Naive thymus-derived CD8-positive, alpha-beta T cell (primary cell): ENCODE measurements at regions of chr13 and their contacts with region 1.

Region 1: GRCh38 chr13:73625562-73626339 is 508.5 kb downstream of the KLF12 start:
- DNase-seq: peak in 7 of 10 donors; percentile 12 to 73 (median 51)
- ATAC-seq: peak; percentile 98 to 99
- H3K4me3 Mint-ChIP-seq: peak overlapping the region; percentile 25 to 71 (median 62)
- H3K27ac Mint-ChIP-seq: peak overlapping the region; percentile 22 to 92 (median 84)
- H3K4me1 Mint-ChIP-seq: peaks cover 3 to 51% (median 36%) of the 10 kb centered on the region in 4 donors
- H3K27me3 Mint-ChIP-seq: no peaks in the 10 kb centered on the region

Region 2: DNA sequence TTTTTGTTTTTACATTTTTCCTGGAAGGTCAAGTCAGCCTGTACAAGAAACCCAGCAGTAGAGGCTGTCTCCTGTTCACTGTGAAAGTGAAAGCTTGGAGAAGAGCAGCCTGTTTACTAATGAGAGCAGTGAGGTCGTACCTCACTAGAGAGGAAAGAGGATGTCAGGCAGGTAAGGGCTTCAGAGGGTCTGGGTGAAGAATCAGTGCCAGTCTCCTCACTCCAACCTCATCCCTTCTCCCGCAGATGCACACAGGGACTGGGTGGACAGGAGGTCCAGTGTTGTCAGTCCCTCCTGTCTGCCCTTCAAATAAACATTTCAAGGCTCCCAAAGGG is 104.5 kb before region 1 on chr13:
- POLR2A ChIA-PET with region 1: interaction called, 10 read pairs
- DNase-seq: peak in 6 of 10 donors; percentile 8 to 57 (median 40)
- ATAC-seq: peak; percentile 91
- H3K4me3 Mint-ChIP-seq: peak overlapping the region; percentile 75 to 92 (median 86)
- H3K27ac Mint-ChIP-seq: peak overlapping the region; percentile 89 to 97 (median 96)
- H3K4me1 Mint-ChIP-seq: peaks cover 10 to 22% (median 19%) of the 10 kb centered on the region in 4 donors
- H3K27me3 Mint-ChIP-seq: no peaks in the 10 kb centered on the region

Region 3: GRCh38 chr13:73608711-73609485 is 16.9 kb before region 1 on chr13:
- POLR2A ChIA-PET with region 1: no interaction called
- DNase-seq: no peak
- ATAC-seq: no peak
- H3K4me3 Mint-ChIP-seq: no peak overlapping the region
- H3K27ac Mint-ChIP-seq: no peak overlapping the region
- H3K4me1 Mint-ChIP-seq: peaks cover 0 to 5% (median 0%) of the 10 kb centered on the region in 4 donors
- H3K27me3 Mint-ChIP-seq: no peaks in the 10 kb centered on the region

Region 4: GRCh38 chr13:73661687-73662425 is 36.1 kb after region 1 on chr13:
- POLR2A ChIA-PET with region 1: interaction called, 11 read pairs
- DNase-seq: no peak
- ATAC-seq: no peak
- H3K4me3 Mint-ChIP-seq: no peak overlapping the region
- H3K27ac Mint-ChIP-seq: no peak overlapping the region
- H3K4me1 Mint-ChIP-seq: peaks cover 0 to 5% (median 0%) of the 10 kb centered on the region in 4 donors
- H3K27me3 Mint-ChIP-seq: peaks cover 0 to 3% (median 0%) of the 10 kb centered on the region in 5 donors

Region 5: DNA sequence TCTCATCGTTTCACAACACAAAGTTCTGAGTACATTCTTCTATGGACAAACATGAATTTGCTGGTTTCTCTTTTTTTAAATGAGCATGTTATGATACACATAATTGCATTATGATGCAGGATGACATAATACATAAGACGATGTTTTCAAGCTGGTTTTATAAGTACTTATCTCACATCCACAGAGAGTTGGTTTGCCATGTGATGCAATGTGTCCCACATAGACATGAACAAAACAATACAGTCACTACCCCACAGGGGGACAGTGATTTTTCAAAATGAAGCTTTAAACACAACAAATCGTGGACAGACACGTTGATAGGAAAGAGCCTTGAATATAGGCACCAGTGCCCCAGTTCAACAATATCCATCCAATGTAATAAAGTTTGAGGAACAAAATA is 61.3 kb after region 1 on chr13:
- POLR2A ChIA-PET with region 1: no interaction called
- DNase-seq: no peak
- ATAC-seq: no peak
- H3K4me3 Mint-ChIP-seq: no peak overlapping the region
- H3K27ac Mint-ChIP-seq: peak overlapping the region in 1 of 10 donors; percentile 15
- H3K4me1 Mint-ChIP-seq: peaks cover 0 to 3% (median under 1%) of the 10 kb centered on the region in 4 donors
- H3K27me3 Mint-ChIP-seq: no peaks in the 10 kb centered on the region